H1 (cell line): ENCODE measurements at regions of chr18 and their contacts with region 1.

Region 1: DNA sequence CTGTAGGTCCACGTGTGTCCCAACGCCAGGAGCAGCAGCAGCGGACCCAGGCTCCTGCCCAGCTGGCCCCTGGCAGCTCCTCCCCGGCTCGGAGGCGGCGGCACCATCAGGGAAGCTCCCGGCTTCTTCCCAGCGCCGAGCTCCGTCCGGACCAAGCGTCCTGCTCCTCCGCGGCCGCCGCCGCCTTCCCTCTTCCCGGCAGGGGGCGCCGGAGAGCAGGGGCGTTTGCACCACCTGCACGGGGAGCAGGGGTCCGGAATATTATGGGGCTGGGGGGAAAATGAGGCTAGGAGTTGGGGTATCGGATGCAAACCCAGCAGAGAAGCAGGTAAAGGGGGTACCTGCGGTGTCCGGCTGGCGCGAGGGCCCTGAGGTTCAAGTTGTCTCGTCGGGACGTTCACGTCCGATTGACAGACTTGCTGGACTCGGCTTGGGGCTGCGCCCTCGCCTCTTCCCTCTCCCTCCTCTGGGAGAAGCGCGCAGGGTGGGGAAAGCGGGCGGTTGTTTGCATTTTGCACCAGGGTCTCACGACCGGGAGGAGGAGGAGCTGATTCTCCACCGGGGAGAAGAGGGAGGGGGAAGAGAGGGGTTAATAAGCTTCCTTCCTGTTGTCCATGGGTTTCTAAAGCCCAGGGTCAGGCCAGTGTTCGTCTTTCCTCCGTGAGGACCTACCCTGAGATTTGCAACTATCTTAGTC is at the start of gene CCBE1:
- DNase-seq: peak; percentile 49 to 96
- H3K4me3 ChIP-seq: peak within 1 kb of the TSS; percentile 65 to 80 (median 72)
- H3K27ac ChIP-seq: no peak within 1 kb of the TSS
- H3K4me1 ChIP-seq: peaks cover 7 to 34% (median 15%) of the 10 kb centered on the region in 4 experiments
- H3K27me3 ChIP-seq: peaks cover 7 to 35% (median 31%) of the 10 kb centered on the region in 4 experiments
- CTCF ChIP-seq: peak; percentile 81 to 88 (median 82)
- EP300 ChIP-seq: no peak
- POLR2A ChIP-seq: no peak
- RAD21 ChIP-seq: peak; percentile 55 to 68
- total RNA-seq, gene CCBE1: 2.6 and 4.4 TPM in 2 replicates

Region 2: DNA sequence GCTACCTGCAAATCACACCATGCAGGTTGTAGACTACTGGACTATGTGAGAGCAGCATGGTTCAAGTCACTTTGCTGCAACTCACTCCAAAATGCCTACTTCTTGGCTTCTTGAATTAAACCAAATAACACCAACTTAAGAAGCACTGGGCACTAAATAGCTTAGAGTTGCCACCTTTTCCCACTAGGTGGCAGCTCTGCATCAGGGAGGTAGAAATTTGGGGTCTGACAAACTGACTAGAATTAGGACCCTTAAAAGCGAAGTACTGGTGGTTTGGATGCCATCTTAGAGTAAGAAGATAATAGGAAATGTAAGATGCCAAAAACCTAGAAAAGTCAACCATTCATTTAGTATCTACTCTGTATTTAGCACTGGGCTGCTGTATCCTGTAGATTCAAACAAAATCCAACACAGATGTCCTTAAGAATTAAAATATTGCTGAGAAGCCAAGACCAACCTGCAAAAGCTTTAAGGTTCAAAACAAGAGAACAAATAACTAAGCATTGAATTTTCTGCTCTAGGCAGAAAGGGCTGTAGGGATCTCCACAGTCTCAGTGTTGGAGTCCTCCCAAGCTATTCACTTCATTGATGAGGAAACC is 65.7 kb before region 1 on chr18:
- CTCF ChIA-PET with region 1: interaction called, 20 read pairs
- POLR2A ChIA-PET with region 1: no interaction called
- DNase-seq: peak in 1 of 2 experiments; percentile 59
- H3K4me3 ChIP-seq: no peak overlapping the region
- H3K27ac ChIP-seq: no peak overlapping the region
- H3K4me1 ChIP-seq: peaks cover 0 to 9% (median 3%) of the 10 kb centered on the region in 4 experiments; a peak in 4 of 7 replicates
- H3K27me3 ChIP-seq: no peaks in the 10 kb centered on the region
- CTCF ChIP-seq: peak in 2 of 3 experiments; percentile 80 to 85; a peak in 3 of 4 replicates
- EP300 ChIP-seq: no peak
- POLR2A ChIP-seq: no peak
- RAD21 ChIP-seq: peak; percentile 94 to 95

Region 3: DNA sequence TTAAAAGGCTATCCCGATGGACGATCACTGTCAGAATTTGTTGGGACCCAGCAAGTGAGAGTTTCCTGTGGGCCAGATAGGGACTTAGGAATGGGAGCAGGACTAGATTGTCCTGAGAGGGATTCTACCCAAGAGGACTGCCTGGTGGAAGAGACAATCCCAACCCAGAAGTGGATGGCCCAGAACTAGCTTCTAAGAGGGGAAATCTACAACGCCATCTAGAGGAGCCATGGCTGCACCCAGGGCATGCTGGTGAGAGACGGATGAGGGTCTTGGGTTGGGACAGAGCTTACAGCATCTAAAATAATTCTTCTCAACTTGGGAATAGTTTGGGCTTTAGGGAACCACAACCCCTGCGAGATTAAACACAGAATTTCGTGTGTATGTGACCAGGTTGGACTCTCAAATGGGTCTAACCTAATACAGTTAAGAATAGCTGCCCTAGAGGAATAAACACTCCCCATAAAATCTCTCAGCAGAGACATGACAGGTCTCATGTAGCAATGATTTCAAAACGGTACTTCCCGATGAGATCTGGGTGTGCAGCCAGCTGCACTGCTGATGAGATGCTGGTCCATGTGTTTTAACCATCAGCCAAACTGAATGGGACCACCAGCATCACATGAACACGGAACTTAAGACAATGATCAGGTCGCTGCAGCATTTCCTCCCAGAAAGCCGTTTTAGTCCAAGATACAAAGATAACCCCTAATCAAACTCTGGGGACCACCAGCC is 51.0 kb before region 1 on chr18:
- CTCF ChIA-PET with region 1: interaction called, 12 read pairs
- POLR2A ChIA-PET with region 1: no interaction called
- DNase-seq: no peak
- H3K4me3 ChIP-seq: no peak overlapping the region
- H3K27ac ChIP-seq: no peak overlapping the region
- H3K4me1 ChIP-seq: peaks cover 0 to 9% (median 3%) of the 10 kb centered on the region in 4 experiments; a peak in 4 of 7 replicates
- H3K27me3 ChIP-seq: no peaks in the 10 kb centered on the region; a peak in 2 of 7 replicates
- CTCF ChIP-seq: peak; percentile 50 to 68 (median 66)
- EP300 ChIP-seq: no peak
- POLR2A ChIP-seq: no peak
- RAD21 ChIP-seq: peak; percentile 39 to 55

Region 4: GRCh38 chr18:59660786-59661743 is 36.3 kb before region 1 on chr18:
- CTCF ChIA-PET with region 1: interaction called, 14 read pairs
- POLR2A ChIA-PET with region 1: no interaction called
- DNase-seq: no peak
- H3K4me3 ChIP-seq: no peak overlapping the region
- H3K27ac ChIP-seq: no peak overlapping the region
- H3K4me1 ChIP-seq: no peaks in the 10 kb centered on the region; a peak in 2 of 7 replicates
- H3K27me3 ChIP-seq: no peaks in the 10 kb centered on the region
- CTCF ChIP-seq: no peak
- EP300 ChIP-seq: no peak
- POLR2A ChIP-seq: no peak
- RAD21 ChIP-seq: no peak

Region 5: DNA sequence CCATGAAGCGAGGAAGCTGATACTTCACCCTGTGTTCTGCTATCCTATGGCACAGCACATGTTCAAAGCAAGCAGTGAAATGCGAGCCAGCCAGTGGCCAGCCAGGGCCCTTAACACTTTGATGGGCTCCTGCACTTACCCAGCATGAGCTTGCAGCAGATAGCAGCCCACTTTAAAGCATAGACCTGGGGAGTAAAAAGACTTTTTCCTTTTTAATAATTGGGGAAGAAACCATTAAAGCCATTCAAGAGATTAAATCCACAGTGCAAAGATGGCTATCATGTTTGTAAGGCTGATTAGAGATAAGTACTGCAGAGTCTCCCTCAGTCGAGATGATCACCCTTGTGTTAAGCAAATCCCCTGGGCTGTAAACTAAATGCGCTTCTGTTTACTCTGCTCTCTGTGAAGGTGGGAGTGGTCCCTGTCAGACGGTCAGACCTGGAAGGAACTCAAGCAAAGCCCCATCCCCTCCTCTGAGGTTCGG is 15.8 kb before region 1 on chr18:
- CTCF ChIA-PET with region 1: interaction called, 78 read pairs
- POLR2A ChIA-PET with region 1: interaction called, 6 read pairs
- DNase-seq: no peak
- H3K4me3 ChIP-seq: no peak overlapping the region
- H3K27ac ChIP-seq: no peak overlapping the region
- H3K4me1 ChIP-seq: peaks cover 0 to 9% (median 4%) of the 10 kb centered on the region in 4 experiments; a peak in 4 of 7 replicates
- H3K27me3 ChIP-seq: 0 out of 7 replicates have a peak, but pooled peaks cover 0 to 2% (median 0%) of the 10 kb centered on the region in 4 experiments
- CTCF ChIP-seq: no peak
- EP300 ChIP-seq: no peak
- POLR2A ChIP-seq: no peak
- RAD21 ChIP-seq: no peak

Region 6: GRCh38 chr18:59718108-59718463 is 20.7 kb after region 1 on chr18:
- CTCF ChIA-PET with region 1: interaction called, 60 read pairs
- POLR2A ChIA-PET with region 1: no interaction called
- DNase-seq: no peak
- H3K4me3 ChIP-seq: no peak overlapping the region
- H3K27ac ChIP-seq: no peak overlapping the region
- H3K4me1 ChIP-seq: peaks cover 0 to 3% (median 0%) of the 10 kb centered on the region in 4 experiments; a peak in 2 of 7 replicates
- H3K27me3 ChIP-seq: no peaks in the 10 kb centered on the region
- CTCF ChIP-seq: no peak
- EP300 ChIP-seq: no peak
- POLR2A ChIP-seq: no peak
- RAD21 ChIP-seq: no peak

Region 7: DNA sequence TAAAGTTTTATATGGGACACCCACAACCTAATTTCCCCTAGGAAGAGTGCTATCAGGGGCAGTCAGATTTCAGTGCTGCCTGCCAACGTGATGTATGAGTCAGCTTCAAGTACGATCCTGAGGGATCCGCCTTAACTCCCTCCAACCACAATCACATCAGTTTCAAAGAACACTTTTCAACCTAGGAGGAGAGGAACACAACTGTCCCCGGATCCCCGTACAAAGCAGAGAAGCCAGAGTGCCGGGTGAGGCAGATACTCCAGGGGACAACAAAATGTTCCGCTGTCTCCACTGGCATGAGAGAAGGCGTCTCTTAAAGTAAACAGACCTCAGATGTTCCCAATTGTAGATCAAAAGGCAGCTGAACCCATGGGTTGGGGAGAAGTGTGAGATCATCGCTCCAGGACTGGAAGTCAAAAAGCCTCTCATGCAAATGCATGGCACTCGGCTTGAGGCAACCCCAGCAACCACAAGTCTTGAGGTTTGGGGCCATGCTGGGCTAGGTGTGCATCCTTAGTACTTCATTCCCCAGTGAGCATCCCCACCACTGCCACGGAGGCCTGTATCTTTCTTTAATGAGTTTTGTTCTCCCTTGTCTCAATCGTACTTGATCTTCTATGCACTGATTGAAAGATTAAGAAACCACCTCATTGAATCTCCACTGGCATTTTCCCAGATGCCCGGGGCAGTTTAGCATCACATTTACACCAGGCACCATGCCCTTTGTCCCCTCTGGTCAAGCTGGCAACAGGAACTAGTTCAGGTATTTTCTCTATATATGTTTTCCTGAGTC is 90.8 kb after region 1 on chr18:
- CTCF ChIA-PET with region 1: interaction called, 13 read pairs
- POLR2A ChIA-PET with region 1: no interaction called
- DNase-seq: no peak
- H3K4me3 ChIP-seq: no peak overlapping the region
- H3K27ac ChIP-seq: no peak overlapping the region
- H3K4me1 ChIP-seq: no peaks in the 10 kb centered on the region
- H3K27me3 ChIP-seq: no peaks in the 10 kb centered on the region
- CTCF ChIP-seq: no peak
- EP300 ChIP-seq: no peak
- POLR2A ChIP-seq: no peak
- RAD21 ChIP-seq: no peak